ENCODE measurements at regions of chr12 and their contacts with region 1.

Region 1: DNA sequence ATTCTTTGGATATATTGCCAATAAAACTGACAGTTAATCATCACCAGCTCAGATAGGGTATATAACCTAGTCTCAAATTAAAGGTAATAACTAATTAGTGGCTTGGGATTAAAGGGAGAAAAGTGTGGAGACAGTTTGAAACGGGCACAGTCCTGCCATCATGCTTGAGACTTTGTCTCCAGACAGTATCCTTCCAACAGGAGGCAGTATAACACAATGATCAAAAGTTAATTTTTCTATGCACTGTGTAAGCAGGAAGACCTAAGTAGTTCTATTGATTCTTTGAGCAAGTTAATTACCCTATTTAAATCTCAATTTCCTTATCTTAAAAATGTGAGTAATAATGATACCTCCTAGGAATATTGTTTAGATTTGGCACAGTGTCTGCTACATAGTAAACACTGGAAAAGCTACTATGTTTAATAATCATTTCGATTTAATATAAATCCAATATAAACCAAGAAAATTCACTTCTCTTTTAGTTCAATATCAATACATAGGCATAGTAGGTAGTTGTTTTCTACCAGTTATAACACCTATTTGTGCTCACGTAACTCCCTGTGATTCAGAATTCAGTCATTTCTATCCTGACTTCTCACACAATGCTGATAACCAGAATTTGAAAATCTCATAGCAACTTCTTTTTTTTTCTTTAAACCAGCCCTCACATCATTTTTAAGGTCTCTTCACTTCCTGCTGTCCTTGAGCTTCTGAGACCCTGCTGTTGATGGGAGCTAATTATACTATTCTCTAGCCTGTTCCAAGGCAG is 53.7 kb downstream of the GALNT4 start:
- DNase-seq: peak; percentile 20 to 70
- ATAC-seq: peak; percentile 90 to 95
- H3K4me3 ChIP-seq: no peak overlapping the region
- H3K27ac ChIP-seq: peak overlapping the region in 1 of 2 experiments; percentile 43; a peak in 1 of 6 replicates
- H3K4me1 ChIP-seq: peaks cover 51% of the 10 kb centered on the region
- CTCF ChIP-seq: peak; percentile 83
- EP300 ChIP-seq: no peak
- POLR2A ChIP-seq: no peak
- RAD21 ChIP-seq: peak; percentile 83 to 86

Region 2: DNA sequence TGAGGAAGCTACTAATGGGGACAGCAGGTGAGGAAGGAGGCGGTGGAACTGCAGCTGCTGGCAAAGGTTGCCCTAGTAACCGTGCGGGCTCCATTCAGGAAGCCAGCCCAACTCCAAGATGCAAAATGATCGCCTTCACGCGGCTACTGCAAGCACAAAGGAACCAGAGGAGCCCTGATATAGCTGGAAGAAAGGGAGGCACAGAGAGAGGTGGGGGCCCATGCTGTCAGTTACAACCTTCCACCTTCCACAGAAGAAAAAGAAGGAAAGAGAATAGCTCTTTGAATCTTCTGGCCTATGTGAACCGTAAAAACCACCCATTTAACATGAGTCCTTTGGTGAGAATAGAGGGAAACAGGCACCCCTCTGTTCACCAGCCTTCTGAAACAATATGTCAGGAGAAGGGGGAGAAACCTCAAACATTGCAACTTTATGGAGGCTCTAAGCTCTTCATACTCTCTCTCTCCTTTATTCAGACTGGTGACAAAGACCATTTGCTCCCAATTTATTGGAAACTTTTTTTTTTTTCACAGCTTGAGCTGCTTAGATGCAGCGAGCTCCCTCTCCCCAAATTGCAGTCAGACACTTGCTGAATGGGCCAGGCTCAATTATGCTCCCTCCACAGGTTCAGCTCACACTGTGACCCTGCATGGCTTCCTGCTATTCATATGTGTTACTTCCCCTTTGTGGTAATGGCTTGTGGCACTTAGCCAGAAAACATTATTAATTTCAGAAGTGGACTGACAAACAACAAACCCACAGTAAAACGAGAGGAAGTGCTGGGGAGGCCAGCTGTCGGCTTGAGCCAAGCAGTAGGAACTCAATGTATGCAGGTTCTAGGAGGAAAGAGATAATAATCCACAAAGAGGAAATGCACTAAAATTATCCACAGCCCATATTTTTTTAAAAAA is 124.8 kb before region 1 on chr12:
- CTCF ChIA-PET with region 1: no interaction called
- POLR2A ChIA-PET with region 1: no interaction called
- DNase-seq: no peak
- ATAC-seq: peak; percentile 20 to 36; a peak in 3 of 6 replicates
- H3K4me3 ChIP-seq: no peak overlapping the region
- H3K27ac ChIP-seq: no peak overlapping the region
- H3K4me1 ChIP-seq: peaks cover 9% of the 10 kb centered on the region; the same call in 1 of the 3 replicates
- CTCF ChIP-seq: no peak
- EP300 ChIP-seq: no peak
- POLR2A ChIP-seq: no peak
- RAD21 ChIP-seq: no peak

Region 3: GRCh38 chr12:89529738-89530137 is 58.8 kb after region 1 on chr12:
- CTCF ChIA-PET with region 1: interaction called, 34 read pairs
- POLR2A ChIA-PET with region 1: interaction called, 3 read pairs
- DNase-seq: peak; percentile 66 to 67
- ATAC-seq: no peak
- H3K4me3 ChIP-seq: no peak overlapping the region
- H3K27ac ChIP-seq: peak overlapping the region in 1 of 2 experiments; percentile 31; a peak in 1 of 6 replicates
- H3K4me1 ChIP-seq: peaks cover 10% of the 10 kb centered on the region; the same call in 2 of the 3 replicates
- CTCF ChIP-seq: peak; percentile 84
- EP300 ChIP-seq: no peak
- POLR2A ChIP-seq: no peak
- RAD21 ChIP-seq: peak; percentile 89 to 92

Measured in A549 (cell line).